ENCODE measurements at regions of chr17 and their contacts with region 1.

Region 1: DNA sequence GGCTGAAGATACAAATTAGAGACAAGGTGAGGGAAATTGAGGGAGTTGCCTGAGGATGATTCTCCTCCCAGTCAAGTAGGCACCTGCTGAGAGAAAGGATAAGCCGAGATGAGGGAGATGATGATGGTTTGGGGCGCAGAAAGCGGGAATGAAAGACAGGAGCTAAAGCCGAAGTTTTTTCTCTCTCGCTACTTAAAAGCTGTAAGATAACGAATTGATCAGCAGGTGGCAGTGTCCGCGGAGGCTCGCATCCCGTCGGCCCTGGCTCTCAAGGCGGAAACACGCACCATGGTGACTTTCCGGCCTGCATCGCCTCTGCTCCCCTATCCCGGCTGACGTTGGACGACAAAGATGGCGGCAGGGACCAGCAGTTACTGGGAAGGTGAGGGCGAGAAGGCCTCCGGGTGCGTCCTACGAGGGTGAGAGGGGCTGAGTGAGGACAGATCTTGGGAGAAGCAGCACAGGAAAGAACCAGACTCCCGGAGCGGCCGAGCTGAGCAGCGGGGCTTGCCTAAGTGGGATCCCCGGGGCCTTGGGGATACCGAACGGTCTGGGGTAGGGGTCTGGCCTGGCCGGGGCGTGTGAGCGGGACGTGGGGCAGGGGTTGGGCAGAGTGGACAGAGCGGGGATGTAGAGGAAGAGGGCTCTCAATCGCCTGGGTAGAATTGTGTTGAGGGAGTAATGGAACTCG is at the start of gene GOSR1:
- DNase-seq: peak; percentile 97
- ATAC-seq: peak; percentile 99
- H3K4me3 Mint-ChIP-seq: peak within 1 kb of the TSS; percentile 97
- H3K27ac Mint-ChIP-seq: peak within 1 kb of the TSS; percentile 98
- H3K4me1 Mint-ChIP-seq: peaks cover 32% of the 10 kb centered on the region
- H3K27me3 Mint-ChIP-seq: peaks cover 2% of the 10 kb centered on the region
- CTCF ChIP-seq: peak; percentile 72
- total RNA-seq, gene GOSR1: 37.1 to 38.8 TPM

Region 2: GRCh38 chr17:30493780-30494179 is 16.6 kb after region 1 on chr17:
- CTCF ChIA-PET with region 1: interaction called, 18 read pairs
- POLR2A ChIA-PET with region 1: no interaction called
- intact Hi-C with region 1: no loop called
- DNase-seq: no peak
- ATAC-seq: no peak
- H3K4me3 Mint-ChIP-seq: no peak overlapping the region
- H3K27ac Mint-ChIP-seq: no peak overlapping the region
- H3K4me1 Mint-ChIP-seq: no peaks in the 10 kb centered on the region
- H3K27me3 Mint-ChIP-seq: no peaks in the 10 kb centered on the region
- CTCF ChIP-seq: no peak

Region 3: DNA sequence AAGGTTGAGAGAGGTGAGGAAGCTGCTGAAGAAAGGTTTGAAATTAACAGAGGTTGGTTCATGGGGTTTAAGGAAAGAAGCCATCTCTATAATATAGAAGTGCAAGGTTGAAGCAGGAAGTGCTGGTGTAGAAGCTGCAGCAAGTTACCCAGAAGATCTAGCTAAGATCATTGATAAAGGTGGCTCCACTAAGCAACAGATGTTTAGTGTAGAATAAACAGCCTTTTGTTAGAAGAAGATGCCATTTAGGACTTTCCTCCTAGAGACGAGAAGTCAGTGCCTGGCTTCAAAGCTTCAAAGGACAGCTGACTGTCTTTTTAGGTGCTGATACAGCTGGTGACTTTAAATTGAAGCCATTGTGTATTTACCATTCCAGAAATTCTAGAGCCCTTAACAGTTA is 29.3 kb after region 1 on chr17:
- CTCF ChIA-PET with region 1: interaction called, 11 read pairs
- POLR2A ChIA-PET with region 1: interaction called, 3 read pairs
- intact Hi-C with region 1: no loop called
- DNase-seq: no peak
- ATAC-seq: no peak
- H3K4me3 Mint-ChIP-seq: no peak overlapping the region
- H3K27ac Mint-ChIP-seq: no peak overlapping the region
- H3K4me1 Mint-ChIP-seq: peaks cover 4% of the 10 kb centered on the region
- H3K27me3 Mint-ChIP-seq: no peaks in the 10 kb centered on the region
- CTCF ChIP-seq: no peak

Region 4: DNA sequence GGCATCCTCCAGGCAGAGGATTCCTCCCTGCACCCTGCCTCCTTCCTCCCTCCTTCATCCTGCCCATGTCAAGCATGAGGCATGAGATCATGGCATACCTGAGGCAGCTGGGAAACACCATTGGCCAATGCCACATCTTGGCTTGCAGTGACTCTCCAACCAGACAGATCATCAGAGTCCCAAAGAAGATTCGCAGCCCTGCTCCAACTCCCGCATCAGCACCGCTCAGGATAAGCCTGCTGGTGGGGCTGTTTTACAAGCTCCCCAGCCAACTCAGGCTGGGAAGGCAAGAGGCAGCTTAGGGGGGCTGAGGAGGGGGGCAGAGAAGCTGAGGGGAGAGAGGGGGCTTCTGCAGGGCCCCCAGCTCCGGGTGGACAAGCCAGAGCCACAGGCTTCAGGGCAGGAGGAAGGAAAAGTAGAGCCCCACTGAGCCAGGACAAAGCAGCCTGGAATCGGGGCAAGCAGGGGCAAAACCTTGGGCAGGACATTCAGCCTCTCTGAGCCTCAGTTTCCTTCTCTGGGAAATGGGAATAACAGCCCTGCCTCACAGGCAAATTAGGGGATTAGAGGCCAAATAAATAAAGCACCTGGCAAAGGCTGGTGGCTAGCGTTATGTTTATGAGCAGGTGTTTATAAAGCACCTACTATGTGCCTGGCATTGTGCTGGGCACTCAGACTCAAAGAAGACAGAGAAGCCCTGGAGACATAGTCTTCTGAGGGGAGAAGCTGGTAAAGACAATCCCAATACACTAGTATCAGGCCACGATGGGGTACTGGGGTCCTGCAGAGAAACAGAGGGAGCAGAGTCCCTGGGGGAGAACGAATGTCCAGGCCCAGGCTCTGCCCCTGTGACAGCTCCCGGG is 88.1 kb after region 1 on chr17:
- CTCF ChIA-PET with region 1: no interaction called
- POLR2A ChIA-PET with region 1: no interaction called
- intact Hi-C with region 1: no loop called
- DNase-seq: no peak
- ATAC-seq: no peak
- H3K4me3 Mint-ChIP-seq: no peak overlapping the region
- H3K27ac Mint-ChIP-seq: no peak overlapping the region
- H3K4me1 Mint-ChIP-seq: no peaks in the 10 kb centered on the region
- H3K27me3 Mint-ChIP-seq: no peaks in the 10 kb centered on the region
- CTCF ChIP-seq: no peak

Measured in activated CD8-positive, alpha-beta T cell treated with anti-CD3 and anti-CD28 coated beads for 36 hours (primary cell).